ENCODE measurements at regions of chr20 and their contacts with region 1.

Region 1: DNA sequence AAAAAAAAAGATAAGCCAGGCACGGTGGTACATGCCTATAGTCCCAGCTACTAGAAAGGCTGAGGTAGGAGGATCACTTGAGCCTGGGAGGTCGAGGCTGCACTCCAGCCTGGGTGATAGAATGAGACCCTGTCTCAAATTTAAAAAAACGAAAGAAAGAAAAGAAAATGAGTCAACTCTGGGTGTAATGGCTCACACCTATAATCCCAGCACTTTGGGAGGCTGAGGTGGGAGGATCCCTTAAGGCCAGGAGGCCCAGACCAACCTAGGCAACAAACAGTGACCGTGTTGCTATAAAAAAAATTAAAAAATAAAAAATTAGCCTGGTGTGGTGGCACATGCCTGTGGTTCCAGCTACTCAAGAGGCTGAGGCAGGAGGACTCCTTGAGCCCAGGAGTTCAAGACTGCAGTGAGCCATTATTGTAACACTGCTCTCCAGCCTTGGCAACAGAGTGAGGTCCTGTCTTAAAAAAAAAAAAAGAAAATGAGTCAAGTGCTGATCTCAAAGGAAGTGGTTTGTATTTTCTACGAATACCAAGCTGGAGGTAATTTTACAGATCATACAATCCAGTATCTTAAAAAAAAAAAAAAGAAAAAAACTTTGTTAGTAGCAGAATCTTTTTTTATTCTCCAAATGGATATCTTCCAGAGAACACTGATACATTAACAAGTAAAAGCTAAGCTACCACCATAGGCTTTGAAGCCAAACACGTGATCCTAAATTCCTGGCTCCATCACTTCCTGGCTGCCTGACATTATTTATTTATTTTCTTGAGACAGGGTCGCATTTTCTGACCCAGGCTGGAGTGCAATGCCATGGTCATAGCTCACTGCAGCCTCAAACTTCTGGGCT is 5.7 kb downstream of the COMMD7 start:
- DNase-seq: peak; percentile 54
- H3K4me3 Mint-ChIP-seq: peak overlapping the region; percentile 24
- H3K27ac Mint-ChIP-seq: peak overlapping the region; percentile 87
- H3K4me1 Mint-ChIP-seq: peaks cover 53% of the 10 kb centered on the region
- H3K27me3 Mint-ChIP-seq: no peaks in the 10 kb centered on the region

Region 2: DNA sequence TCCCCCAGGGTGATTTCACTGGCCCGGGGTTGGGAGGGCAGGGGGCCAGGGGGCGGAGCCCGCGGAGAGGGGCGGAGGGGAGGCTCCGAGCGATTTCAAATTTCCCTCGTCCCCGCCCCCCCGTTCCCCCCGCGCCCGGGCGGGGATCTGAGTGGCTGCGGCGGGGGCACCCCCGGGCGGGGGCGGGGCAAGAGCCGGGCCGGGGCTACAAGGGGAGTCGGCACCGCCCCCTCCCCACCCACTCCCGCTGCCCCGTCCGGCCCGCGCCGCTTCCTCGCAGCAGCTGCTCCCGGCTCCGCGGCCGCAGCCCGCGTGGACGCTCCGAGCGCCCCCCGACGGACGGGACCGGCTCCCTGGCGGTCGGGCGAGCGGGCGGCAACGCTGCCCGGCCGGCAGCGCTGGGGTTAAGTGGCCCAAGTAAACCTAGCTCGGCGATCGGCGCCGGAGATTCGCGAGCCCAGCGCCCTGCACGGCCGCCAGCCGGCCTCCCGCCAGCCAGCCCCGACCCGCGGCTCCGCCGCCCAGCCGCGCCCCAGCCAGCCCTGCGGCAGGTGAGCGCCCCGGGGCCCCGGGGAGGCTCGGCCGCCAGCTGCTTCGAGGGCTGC is 24.7 kb after region 1 on chr20 and contains the start of gene DNMT3B:
- CTCF ChIA-PET with region 1: interaction called, 7 read pairs
- POLR2A ChIA-PET with region 1: interaction called, 31 read pairs
- DNase-seq: peak; percentile 77
- H3K4me3 Mint-ChIP-seq: peak within 1 kb of the TSS; percentile 81
- H3K27ac Mint-ChIP-seq: peak within 1 kb of the TSS; percentile 15
- H3K4me1 Mint-ChIP-seq: peaks cover 15% of the 10 kb centered on the region
- H3K27me3 Mint-ChIP-seq: peaks cover 16% of the 10 kb centered on the region
- total RNA-seq, gene DNMT3B: 2.2 to 2.4 TPM